ENCODE measurements at regions of chr22 and their contacts with region 1.

Region 1: DNA sequence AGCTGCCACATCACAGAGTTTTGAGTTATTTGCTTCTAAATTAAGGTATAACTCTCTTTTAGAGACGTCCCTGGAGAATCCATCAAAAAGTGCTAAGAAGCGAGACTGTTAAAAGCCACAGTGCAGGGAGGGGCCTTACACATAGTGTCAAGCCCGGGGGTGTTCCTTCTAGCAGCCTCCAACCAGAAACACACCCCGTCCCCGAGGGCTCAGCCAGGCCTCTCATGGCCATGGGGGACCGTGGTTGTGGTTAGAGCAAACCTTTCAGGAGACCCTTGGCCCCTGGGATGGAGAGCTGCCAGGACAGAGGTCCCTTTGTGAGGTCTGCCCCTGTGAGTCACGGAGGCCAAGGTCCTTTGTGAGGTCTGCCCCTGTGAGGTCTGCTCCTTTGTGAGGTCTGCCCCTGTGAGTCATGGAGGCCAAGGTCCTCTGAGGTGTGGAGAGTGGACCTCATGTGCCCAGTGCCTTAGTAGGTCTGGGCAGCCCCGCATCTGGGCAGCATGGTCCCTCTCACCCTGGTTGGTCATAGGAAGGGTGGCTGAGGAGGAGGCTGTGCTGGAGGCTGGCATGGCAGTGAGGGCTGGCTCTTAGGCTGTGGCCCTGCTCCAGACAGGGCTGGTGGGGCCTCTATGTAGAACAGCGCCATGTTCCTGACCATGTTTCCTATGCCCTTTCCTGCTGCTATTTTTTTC is 5.4 kb downstream of the GNAZ start:
- DNase-seq: peak; percentile 99
- ATAC-seq: peak; percentile 85
- H3K4me3 ChIP-seq: peak overlapping the region in 1 of 3 experiments; percentile 9; a peak in 1 of 6 replicates
- H3K27ac ChIP-seq: peak overlapping the region; percentile 97
- H3K4me1 ChIP-seq: peaks cover 94% of the 10 kb centered on the region
- H3K27me3 ChIP-seq: no peaks in the 10 kb centered on the region
- CTCF ChIP-seq: no peak; the same call in 1 of the 2 replicates
- EP300 ChIP-seq: peak; percentile 93 to 95
- POLR2A ChIP-seq: peak; percentile 60 to 68
- RAD21 ChIP-seq: peak; percentile 66

Region 2: DNA sequence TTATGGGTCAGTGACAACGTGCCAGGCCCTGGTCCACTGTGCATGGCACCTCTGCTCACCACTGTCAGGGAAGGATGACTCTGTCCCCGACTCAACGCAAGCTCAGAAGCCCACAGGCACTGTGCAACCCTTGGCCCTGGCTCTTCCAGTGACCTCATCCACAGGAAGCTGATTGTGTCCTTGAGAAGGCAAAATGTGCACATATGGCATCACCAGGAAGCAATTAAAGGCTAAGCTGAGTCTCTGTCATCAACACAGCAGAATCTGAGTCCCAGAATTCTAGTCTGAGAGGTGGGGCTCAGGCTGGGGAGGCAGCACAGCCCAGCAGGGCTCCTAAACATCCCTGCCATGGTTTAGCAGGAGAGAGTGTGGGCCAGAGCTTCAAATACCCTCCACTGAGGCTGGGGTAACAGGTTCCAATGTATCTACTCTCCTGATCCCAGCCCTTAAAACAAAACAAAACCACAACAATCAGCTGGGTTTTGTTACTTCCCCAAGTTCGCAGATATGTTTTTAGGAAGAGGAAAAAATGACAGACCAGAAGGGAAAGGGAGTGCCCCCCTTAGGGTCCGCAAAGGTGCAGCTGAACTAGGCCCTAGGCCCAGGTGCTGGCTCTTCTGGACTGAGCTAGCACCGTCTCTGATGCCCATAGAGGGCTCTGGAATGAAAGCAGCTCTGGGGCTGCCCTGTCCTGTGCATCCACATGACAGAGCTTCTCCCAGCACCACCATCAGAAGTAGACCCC is 38.8 kb before region 1 on chr22:
- CTCF ChIA-PET with region 1: no interaction called
- POLR2A ChIA-PET with region 1: interaction called, 14 read pairs
- in situ Hi-C with region 1: no loop called
- intact Hi-C with region 1: no loop called
- DNase-seq: peak; percentile 70
- ATAC-seq: peak; percentile 87
- H3K4me3 ChIP-seq: no peak overlapping the region
- H3K27ac ChIP-seq: no peak overlapping the region
- H3K4me1 ChIP-seq: peaks cover 26% of the 10 kb centered on the region
- H3K27me3 ChIP-seq: peaks cover 4 to 43% of the 10 kb centered on the region in 2 experiments; a peak in 3 of 5 replicates
- CTCF ChIP-seq: no peak
- EP300 ChIP-seq: peak in 1 of 2 experiments; percentile 23; a peak in 1 of 4 replicates
- POLR2A ChIP-seq: no peak
- RAD21 ChIP-seq: no peak

Region 3: GRCh38 chr22:23163665-23164064 is 88.0 kb after region 1 on chr22:
- CTCF ChIA-PET with region 1: no interaction called
- POLR2A ChIA-PET with region 1: no interaction called
- in situ Hi-C with region 1: no loop called
- intact Hi-C with region 1: no loop called
- DNase-seq: no peak
- ATAC-seq: peak; percentile 51
- H3K4me3 ChIP-seq: peak overlapping the region in 1 of 3 experiments; percentile 42; a peak in 2 of 6 replicates
- H3K27ac ChIP-seq: peak overlapping the region; percentile 11
- H3K4me1 ChIP-seq: peaks cover 86% of the 10 kb centered on the region
- H3K27me3 ChIP-seq: no peaks in the 10 kb centered on the region
- CTCF ChIP-seq: no peak
- EP300 ChIP-seq: no peak
- POLR2A ChIP-seq: no peak
- RAD21 ChIP-seq: no peak